ENCODE measurements at regions of chr1 and their contacts with region 1.

Region 1: DNA sequence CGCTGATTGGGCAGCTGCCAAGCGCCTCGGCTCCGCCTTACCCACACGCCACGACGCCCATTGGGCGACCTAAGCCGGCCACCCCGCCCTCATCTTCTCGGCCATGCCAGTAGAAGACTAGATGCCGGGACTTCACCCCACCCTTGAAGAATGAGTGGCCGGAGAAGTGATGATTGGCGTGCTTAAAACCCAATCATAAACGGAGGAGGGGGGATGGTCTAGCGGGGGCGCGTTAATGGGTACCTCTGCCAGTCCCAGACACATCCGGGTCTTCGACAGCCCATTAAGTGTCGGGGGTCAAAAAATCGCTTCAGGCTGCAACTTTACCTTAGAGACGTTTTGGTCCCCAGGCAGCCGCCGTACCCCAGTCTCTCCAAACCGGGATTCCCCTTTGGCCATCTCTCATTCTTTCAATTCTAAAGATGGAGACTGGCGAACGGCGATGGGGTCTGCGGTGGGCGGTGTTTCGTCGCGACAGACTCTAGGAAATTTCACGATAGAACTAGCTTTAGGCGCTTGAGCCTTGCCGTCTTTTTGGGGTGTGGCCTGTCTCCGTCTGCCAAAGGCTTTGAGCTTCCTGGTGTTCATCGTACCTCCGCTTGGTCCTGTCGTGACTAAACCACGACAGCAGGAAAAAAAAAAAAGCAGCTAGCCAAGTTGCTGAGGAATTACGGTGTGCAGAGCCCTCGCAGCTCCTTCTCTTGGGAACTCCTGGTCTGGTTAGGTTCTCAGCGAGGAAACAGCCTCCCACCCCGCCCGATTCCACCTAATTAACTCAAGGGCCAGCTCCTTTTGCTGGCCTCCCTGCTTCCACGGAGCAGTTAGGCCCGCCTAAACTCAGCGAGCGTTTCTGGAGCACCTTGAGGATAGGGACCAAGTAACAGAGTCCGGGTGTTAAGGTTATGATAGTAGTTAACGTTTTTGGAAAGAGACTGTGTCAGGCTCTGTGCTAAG is at the start of gene GATAD2B:
- DNase-seq: peak; percentile 99 to 100 (median 100)
- H3K4me3 ChIP-seq: peak within 1 kb of the TSS; percentile 80 to 89 (median 83)
- H3K4me3 Mint-ChIP-seq: peak within 1 kb of the TSS; percentile 95
- H3K27ac ChIP-seq: peak within 1 kb of the TSS; percentile 87 to 93
- H3K27ac Mint-ChIP-seq: peak within 1 kb of the TSS; percentile 90 to 97 (median 95)
- H3K4me1 ChIP-seq: peaks cover 31 to 39% of the 10 kb centered on the region in 2 donors
- H3K4me1 Mint-ChIP-seq: peaks cover 38% of the 10 kb centered on the region
- H3K27me3 ChIP-seq: no peaks in the 10 kb centered on the region
- H3K27me3 Mint-ChIP-seq: peaks cover 0 to 3% (median 0%) of the 10 kb centered on the region in 3 donors
- CTCF ChIP-seq: no peak
- polyA plus RNA-seq, gene GATAD2B: 1.1 to 11.0 (median 2.0) TPM

Region 2: DNA sequence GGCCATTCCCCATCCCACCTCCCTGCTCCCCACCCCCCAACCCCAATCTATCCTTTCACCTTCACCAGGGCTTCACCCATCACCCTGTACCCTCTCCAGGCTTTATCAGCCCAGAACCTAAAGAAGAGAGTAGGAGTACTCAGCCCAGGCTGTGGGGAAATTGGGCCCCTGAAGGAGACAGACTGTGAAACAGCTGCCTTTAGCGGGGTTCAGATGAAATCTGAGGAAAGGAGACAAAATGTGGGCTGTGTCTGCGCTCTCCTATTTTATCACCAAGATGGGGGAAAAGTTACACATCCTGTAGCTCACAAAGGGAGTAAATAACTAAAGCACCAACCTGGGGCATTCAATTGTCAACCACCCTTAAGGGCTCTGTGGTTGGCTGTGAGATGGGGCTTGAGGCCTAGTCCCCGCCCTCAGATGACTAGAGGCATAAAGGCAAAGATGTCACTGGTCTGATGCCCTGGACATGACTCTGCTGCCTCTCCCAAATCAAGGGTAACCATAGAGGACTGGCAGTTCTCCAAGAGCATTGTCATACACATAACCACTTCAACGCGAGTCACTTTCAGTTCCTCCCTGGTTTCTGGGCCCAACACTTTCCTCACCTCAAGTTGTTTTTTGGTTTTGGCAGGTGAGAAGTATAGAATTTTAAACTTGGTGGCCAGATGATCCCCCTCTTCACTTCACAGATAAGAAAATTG is 118.1 kb before region 1 on chr1:
- intact Hi-C with region 1: loop called in 1 of 2 experiments (anchors 5 kb)
- DNase-seq: peak; percentile 98 to 99 (median 99)
- H3K4me3 ChIP-seq: peak overlapping the region in 1 of 3 experiments; percentile 24
- H3K4me3 Mint-ChIP-seq: peak overlapping the region in 1 of 2 donors; percentile 30
- H3K27ac ChIP-seq: peak overlapping the region; percentile 92 to 96
- H3K27ac Mint-ChIP-seq: peak overlapping the region; percentile 92 to 100 (median 98)
- H3K4me1 ChIP-seq: peaks cover 50 to 54% of the 10 kb centered on the region in 2 donors
- H3K4me1 Mint-ChIP-seq: peaks cover 54% of the 10 kb centered on the region
- H3K27me3 ChIP-seq: no peaks in the 10 kb centered on the region
- H3K27me3 Mint-ChIP-seq: peaks cover 0 to 7% (median 3%) of the 10 kb centered on the region in 3 donors
- CTCF ChIP-seq: no peak

Region 3: DNA sequence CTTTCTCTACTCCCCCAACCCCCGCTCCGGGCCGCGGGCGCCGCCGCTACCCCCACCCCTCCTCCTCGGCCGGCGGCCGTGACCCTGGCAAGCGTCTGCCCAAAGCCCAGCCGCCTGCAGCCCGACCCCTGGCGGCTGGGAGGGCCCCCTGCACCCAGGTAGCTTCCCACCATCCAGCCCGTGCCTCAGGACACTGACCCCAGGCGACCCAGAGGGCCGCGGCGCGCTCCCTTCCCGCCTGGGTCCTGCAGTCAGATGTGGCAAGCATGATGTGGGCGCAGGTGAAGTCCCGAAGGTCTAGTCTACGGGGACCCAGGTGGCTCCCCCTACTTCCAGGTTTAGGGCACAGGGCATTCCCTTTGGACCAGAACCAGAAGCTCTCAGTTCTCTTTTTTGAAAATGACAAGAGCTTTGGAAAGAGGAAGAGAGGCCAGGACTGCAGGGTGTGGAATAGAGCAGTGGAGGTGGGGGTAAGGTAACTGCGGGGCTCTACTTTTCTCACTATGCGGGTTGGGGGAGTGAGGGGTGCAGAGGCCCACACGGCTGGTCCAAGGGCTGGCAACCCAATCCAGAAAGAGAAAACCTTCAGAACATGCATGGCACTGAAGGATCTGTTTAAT is 23.5 kb after region 1 on chr1 and contains the start of gene DENND4B:
- intact Hi-C with region 1: loop called in 1 of 2 experiments (anchors 2 kb)
- DNase-seq: peak; percentile 79 to 86 (median 85)
- H3K4me3 ChIP-seq: peak within 1 kb of the TSS; percentile 70 to 83 (median 83)
- H3K4me3 Mint-ChIP-seq: peak within 1 kb of the TSS; percentile 83 to 93
- H3K27ac ChIP-seq: peak within 1 kb of the TSS; percentile 100
- H3K27ac Mint-ChIP-seq: peak within 1 kb of the TSS; percentile 98 to 100 (median 100)
- H3K4me1 ChIP-seq: peaks cover 54 to 57% of the 10 kb centered on the region in 2 donors
- H3K4me1 Mint-ChIP-seq: peaks cover 55% of the 10 kb centered on the region
- H3K27me3 ChIP-seq: no peaks in the 10 kb centered on the region
- H3K27me3 Mint-ChIP-seq: peaks cover 0 to 2% (median 0%) of the 10 kb centered on the region in 3 donors
- CTCF ChIP-seq: peak; percentile 94
- polyA plus RNA-seq, gene DENND4B: 7.8 to 324 (median 10.9) TPM

Region 4: DNA sequence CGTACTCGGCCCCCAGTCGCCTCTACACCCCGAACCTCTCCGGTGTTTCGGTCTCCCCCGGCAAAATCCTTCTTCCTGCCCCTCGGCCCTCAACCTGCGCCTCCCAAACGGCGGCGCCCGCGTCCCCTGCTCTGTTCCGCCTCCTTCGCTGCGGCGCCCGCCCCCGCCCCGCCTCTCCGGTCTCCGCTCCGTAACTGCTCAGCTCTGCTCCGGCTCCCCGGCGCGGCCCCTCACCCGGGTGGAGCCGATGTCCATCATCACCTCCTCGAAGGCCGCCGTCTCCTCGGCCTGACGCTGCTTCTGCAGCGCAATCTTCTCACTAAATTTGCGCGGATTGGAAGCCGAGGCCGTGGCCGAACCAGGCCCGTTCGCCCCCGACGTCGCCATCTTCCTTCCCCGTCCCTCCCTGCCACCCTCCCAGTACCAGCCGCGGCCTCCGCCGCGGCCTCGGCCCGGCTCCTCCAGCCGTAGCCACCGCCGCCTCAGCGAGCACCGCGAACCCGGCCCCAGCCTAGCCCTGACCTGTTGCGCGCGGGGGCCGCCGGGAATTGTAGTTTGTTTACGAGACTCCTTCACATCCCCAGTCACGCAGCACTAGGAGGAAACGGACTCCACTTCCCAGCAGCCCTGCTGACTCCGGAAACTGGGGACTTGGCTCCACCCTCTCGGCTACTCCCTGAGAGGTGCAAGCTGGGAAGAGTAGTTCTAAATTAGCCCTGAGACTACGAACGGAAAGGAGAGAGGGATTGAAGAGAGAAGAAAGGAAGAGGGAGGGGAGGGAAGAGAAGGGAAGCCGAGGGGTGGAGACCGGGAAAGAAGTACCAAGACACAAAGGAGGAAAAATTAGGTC is 35.1 kb after region 1 on chr1 and contains the start of gene CRTC2:
- intact Hi-C with region 1: loop called in 1 of 2 experiments (anchors 5 kb)
- DNase-seq: peak; percentile 94 to 96 (median 96)
- H3K4me3 ChIP-seq: peak within 1 kb of the TSS; percentile 84 to 97 (median 89)
- H3K4me3 Mint-ChIP-seq: peak within 1 kb of the TSS; percentile 98
- H3K27ac ChIP-seq: peak within 1 kb of the TSS; percentile 57 to 87
- H3K27ac Mint-ChIP-seq: peak within 1 kb of the TSS; percentile 92 to 98 (median 94)
- H3K4me1 ChIP-seq: peaks cover 51 to 63% of the 10 kb centered on the region in 2 donors
- H3K4me1 Mint-ChIP-seq: peaks cover 61% of the 10 kb centered on the region
- H3K27me3 ChIP-seq: no peaks in the 10 kb centered on the region
- H3K27me3 Mint-ChIP-seq: peaks cover 0 to 1% (median 0%) of the 10 kb centered on the region in 3 donors
- CTCF ChIP-seq: no peak
- polyA plus RNA-seq, gene CRTC2: 13.7 to 86.0 (median 21.2) TPM

Measured in CD14-positive monocyte (primary cell).